PC-9 (cell line): ENCODE measurements at regions of chr7 and their contacts with region 1.

Region 1: DNA sequence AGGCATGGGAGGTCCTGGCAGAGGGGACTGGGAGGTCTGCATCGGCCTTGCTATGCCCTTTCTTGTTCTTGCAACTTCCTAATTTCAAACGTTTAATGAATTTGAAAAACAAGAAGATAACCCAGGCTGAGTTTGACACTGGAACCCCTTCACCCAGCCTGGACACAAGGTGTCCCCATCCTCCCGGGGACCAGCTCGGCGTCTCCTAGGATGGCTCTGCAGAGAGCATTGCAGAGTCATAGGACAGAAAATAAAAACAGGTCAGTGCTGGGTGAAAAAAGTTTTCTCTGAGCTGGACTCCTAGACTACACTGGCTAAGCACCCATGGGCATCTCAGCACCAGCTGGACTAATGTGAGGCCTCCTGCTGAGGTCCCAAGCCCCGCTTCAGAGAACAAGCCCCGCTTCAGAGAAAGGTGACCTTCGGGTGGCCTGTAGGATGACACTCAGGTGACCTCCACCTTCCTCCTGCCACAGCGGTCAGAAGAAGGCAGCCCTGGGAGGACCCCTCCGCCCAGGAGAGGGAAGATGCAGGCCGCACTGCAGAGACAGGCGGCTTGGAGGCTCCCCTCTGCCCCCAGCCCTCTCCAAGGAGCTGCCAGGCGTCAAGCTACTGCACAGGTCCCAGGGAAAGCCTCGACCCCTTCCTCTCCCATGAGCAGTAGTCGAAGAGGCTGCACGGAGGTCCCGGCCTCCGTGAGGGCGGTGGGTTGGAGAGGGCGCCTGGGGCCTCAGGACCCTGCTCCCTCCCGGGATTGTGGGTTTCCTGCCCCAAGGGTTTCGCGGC is 9.3 kb upstream of the UNCX start:
- DNase-seq: peak in 1 of 2 experiments; percentile 44
- H3K4me3 ChIP-seq: no peak overlapping the region
- H3K27ac ChIP-seq: no peak overlapping the region
- H3K4me1 ChIP-seq: no peaks in the 10 kb centered on the region
- H3K27me3 ChIP-seq: peaks cover 95% of the 10 kb centered on the region
- CTCF ChIP-seq: peak; percentile 48; the same call in 1 of the 2 replicates

Region 2: DNA sequence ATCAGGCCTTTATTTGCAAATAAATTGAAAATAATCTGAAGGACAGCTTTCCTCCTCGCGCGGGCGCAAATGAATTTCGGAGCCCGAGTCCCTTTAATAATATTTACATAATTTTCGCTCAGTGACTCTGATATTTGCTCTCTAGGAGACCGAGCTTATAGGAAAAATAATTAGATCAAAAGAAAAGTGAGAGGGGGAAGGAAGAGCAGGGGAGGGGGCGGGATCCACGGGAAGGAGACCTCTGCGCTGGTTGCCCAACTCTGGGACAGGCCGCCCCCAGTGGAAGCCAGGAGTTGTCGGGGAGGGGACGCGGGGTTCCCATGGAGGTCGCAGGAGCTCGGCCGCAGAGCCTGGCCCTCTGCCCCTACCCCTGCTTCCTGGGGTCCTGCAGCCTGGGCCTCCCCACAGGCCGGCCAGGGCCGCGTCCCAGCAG is 15.1 kb after region 1 on chr7:
- CTCF ChIA-PET with region 1: interaction called, 12 read pairs
- POLR2A ChIA-PET with region 1: no interaction called
- intact Hi-C with region 1: no loop called
- DNase-seq: no peak
- H3K4me3 ChIP-seq: no peak overlapping the region
- H3K27ac ChIP-seq: no peak overlapping the region
- H3K4me1 ChIP-seq: no peaks in the 10 kb centered on the region
- H3K27me3 ChIP-seq: peaks cover 81% of the 10 kb centered on the region
- CTCF ChIP-seq: no peak

Region 3: DNA sequence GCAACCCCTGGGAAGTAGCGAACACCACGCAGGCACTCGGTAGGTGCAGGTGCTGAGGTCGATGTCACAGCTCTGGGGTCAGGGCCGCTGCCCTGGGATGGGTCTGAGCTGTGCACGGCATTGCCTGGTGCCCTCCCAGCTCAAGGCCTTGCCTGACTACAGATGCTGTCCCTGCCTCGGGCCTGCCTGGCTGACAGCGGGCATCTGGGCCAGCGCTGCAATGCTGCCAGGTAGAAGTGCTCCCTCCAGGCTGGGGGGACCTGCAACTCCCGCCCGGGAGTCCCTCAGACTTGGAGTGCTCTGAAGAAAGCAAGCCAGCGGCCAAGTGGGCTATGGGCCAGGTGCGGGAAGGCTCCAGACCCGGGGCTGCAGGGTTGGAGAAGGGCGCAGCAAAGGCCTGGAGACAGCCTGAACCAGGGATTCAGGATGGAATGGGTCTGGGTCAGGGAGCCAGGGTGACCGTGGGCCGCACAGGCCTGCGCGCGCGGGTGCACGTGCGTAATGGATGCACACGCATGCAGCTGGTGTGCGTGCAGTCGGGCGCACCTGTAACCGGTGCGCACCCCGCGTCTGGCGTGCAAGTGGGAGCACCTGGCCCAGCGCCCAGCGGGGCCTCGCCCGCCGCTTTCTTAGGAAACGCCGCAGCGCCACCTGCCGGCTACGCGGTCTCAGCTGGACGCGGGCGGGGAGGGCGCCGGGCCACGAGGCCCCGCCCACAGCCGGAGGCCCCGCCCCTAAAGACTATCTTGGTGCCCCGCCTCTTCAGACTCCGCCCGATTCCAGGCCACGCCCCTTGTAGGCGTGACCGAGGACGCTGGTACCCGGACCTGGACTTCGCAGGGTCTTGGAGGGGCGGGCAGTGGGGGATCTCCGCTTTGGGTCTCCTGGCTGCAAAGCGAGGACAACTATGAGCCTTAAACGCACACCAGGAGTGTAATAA is 189.2 kb after region 1 on chr7:
- CTCF ChIA-PET with region 1: interaction called, 7 read pairs
- POLR2A ChIA-PET with region 1: no interaction called
- intact Hi-C with region 1: loop called (anchors 2 kb)
- DNase-seq: peak; percentile 65 to 91
- H3K4me3 ChIP-seq: no peak overlapping the region; the same call in 1 of the 2 replicates
- H3K27ac ChIP-seq: no peak overlapping the region
- H3K4me1 ChIP-seq: no peaks in the 10 kb centered on the region
- H3K27me3 ChIP-seq: peaks cover 65% of the 10 kb centered on the region
- CTCF ChIP-seq: peak; percentile 90

Region 4: DNA sequence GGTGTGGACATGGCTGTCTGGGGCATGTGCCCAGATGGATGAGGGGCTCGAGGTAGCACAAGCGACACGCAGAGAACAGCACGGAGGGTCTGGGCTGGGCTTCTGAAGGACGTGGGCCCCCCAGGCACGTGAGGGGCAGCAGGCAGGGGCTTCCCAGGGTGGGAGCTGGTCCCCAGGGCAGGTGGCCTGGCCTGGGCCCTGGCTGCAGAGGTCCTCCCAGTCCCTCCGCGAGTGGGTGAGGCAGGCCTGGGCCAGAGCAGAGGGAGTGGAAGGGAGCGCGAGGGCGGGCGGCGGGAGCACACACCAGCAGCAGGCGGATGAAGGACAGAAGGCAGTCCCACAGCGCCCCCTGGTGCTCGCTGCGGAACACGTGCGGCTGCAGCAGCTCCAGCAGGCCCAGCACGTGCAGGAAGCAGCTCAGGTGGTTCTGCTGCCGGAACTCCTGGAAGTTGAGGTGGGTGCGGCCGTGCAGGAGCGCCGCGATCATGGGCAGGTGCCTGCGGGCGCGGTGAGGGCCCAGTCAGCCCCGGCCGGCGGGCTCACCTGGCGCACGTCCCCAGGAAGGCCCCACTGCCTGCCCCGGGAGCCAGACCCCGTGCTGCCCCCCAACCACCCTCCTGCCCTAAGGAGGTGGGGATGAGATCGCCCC is 250.6 kb after region 1 on chr7:
- CTCF ChIA-PET with region 1: no interaction called
- POLR2A ChIA-PET with region 1: no interaction called
- intact Hi-C with region 1: loop called (anchors 2 kb)
- DNase-seq: peak; percentile 73 to 95
- H3K4me3 ChIP-seq: no peak overlapping the region
- H3K27ac ChIP-seq: no peak overlapping the region
- H3K4me1 ChIP-seq: no peaks in the 10 kb centered on the region
- H3K27me3 ChIP-seq: no peaks in the 10 kb centered on the region
- CTCF ChIP-seq: peak; percentile 95

Region 5: DNA sequence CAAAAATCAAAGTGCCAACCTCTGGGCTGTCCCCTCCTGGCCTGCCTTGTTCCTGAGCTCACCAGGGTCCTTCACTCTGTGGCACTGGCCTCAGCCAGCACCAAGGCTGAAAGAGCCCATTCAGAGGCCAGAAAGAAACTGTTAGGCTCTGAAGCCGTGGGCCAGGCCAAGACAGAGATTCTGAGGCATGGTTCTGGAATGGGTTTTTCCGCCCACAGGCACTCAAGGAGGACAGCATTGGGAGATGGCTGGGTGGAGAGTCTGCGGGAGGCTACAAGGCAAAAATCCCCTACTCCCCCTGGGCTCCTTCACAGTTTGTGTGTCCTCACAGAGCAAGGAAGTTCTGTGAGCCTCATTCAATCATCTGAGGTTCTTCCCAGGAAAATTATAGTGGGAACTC is 1221.1 kb after region 1 on chr7:
- CTCF ChIA-PET with region 1: no interaction called
- POLR2A ChIA-PET with region 1: no interaction called
- intact Hi-C with region 1: no loop called
- DNase-seq: no peak
- H3K4me3 ChIP-seq: no peak overlapping the region
- H3K27ac ChIP-seq: no peak overlapping the region
- H3K4me1 ChIP-seq: peaks cover 27% of the 10 kb centered on the region
- H3K27me3 ChIP-seq: no peaks in the 10 kb centered on the region
- CTCF ChIP-seq: no peak